PC-3 (cell line): ENCODE measurements at regions of chr10 and their contacts with region 1.

Region 1: DNA sequence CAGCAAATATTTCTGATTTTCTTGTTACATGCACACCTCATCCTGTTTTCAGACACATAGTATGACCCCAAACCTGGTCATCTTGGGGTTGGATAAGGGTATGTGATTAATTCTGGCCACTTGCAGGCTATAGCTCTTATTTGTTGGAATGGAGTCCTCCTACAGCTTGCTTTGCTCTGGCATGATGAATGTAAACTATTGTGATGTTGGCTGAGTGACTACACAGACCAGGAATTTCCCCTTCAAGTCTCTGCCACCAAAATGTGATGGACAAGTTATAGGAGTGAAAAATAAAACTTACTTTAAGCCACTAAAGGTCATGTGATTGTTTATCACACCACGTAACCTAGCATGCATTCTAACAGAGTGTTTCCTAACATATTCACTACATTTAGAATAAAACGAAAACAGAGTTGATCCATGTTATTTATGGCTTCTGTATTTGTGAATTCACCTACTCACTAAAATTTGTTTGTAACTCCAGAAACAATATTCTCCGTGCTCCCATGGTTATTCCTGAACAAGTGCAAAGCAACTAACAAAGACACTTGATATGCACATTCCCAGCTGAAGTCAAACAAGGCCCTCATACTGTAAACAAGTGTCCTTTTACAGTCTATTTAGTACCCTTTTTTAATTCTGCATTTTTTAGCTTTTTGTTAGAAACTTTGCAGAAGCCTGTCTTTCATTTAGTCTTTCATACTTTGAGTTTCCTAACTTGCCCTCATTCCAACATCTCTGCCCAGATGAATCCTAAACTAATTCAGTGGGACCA is 599.2 kb upstream of the PCDH15 start:
- DNase-seq: peak; percentile 36
- ATAC-seq: peak; percentile 90
- H3K4me3 ChIP-seq: no peak overlapping the region
- H3K27ac ChIP-seq: no peak overlapping the region
- H3K4me1 ChIP-seq: no peaks in the 10 kb centered on the region
- H3K27me3 ChIP-seq: no peaks in the 10 kb centered on the region
- CTCF ChIP-seq: no peak

Region 2: GRCh38 chr10:55273946-55274345 is 126.3 kb before region 1 on chr10:
- CTCF ChIA-PET with region 1: no interaction called
- POLR2A ChIA-PET with region 1: no interaction called
- intact Hi-C with region 1: loop called (anchors 5 kb)
- DNase-seq: no peak
- ATAC-seq: no peak
- H3K4me3 ChIP-seq: no peak overlapping the region
- H3K27ac ChIP-seq: no peak overlapping the region
- H3K4me1 ChIP-seq: no peaks in the 10 kb centered on the region
- H3K27me3 ChIP-seq: no peaks in the 10 kb centered on the region
- CTCF ChIP-seq: no peak

Region 3: DNA sequence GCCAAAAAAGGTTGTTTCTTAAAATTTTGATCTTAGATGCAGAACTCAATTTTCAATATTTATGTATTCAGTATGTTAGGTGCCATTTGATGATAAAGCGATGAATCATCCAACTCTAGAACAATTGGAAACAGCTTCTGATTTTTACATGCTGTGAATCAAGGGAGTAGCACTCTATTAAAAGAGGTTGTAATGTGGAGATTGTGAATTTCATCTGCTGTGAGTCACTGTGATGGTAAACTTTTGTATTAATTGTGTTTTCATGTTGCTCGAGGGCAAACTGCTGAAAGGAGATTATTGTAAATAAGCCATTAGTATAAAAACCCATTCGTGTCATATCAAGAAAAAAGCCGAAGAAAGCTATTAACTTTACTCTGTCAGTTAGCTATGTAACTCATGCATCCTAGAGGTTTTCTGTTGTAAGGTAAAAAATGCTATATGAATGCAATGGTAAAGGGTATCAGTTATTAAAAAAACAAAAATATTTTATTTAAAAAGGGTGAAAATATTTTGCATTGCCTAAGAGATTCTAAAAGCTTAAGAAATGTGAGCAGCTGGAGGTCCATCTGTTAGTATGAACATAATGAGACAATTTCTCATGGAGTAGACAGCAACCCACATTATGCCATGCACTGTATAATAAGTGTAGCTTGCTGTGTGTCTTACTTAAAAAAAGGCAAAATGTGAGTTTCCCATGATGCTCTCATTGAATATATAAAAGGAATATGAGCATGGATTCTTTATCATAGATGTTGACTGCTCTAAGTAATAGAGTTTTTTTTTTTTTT is 88.2 kb before region 1 on chr10:
- CTCF ChIA-PET with region 1: interaction called, 3 read pairs
- POLR2A ChIA-PET with region 1: no interaction called
- intact Hi-C with region 1: loop called (anchors 5 kb)
- DNase-seq: peak; percentile 59
- ATAC-seq: peak; percentile 90
- H3K4me3 ChIP-seq: no peak overlapping the region
- H3K27ac ChIP-seq: no peak overlapping the region
- H3K4me1 ChIP-seq: peaks cover 6% of the 10 kb centered on the region; the same call in 1 of the 2 replicates
- H3K27me3 ChIP-seq: no peaks in the 10 kb centered on the region
- CTCF ChIP-seq: no peak